ENCODE measurements at regions of chr3 and their contacts with region 1.

Region 1: DNA sequence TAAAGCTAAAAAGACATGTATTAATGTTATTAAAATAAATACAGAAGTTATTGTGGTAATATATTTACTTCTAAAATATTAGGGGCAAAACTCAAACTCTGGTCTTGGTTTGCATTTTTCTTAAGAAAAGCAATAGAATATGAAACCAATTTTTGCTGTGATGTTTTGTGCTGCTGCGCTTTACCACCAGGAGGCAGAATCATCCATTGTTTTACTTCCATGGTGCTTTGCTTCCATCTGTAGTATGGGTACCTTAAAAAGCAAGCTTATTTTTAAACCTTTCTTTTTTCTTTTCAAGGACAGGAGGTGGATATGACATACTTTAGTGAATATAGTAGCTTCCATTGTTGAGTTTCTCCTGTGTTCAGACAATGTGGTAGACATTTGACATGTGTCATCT is 46.6 kb upstream of the MRPL3 start:
- DNase-seq: no peak
- ATAC-seq: no peak
- H3K4me3 Mint-ChIP-seq: no peak overlapping the region
- H3K27ac Mint-ChIP-seq: no peak overlapping the region
- H3K4me1 Mint-ChIP-seq: peaks cover 11% of the 10 kb centered on the region
- H3K27me3 Mint-ChIP-seq: no peaks in the 10 kb centered on the region
- CTCF ChIP-seq: peak; percentile 45; the same call in 1 of the 2 replicates

Region 2: DNA sequence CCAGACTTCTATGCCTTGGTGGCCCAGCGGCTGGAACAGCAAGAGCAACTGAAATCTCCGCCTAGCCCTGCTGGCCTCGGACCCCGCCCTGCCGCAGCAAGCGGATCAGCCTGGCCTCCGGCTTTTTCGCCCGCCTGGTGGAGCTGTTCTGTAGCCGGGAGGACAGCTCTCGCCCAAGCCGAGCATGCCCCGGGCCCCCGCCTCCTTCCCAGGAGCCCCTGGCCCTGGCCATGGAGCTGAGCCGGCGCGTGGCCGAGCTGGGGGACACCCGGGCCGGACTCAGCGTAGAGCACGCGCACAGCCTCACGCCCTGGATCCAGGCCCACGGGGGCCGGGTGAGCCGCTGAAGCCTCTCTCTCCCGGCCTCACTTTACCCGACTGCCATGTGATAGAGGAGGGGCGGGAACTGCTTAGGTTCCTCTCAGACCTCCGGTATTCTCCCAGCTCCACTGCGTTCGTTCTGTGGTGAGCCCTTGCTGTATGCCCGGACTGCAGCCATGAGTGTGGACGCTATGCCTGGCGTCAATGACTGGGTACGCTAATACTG is 22.5 kb before region 1 on chr3:
- CTCF ChIA-PET with region 1: interaction called, 12 read pairs
- POLR2A ChIA-PET with region 1: interaction called, 8 read pairs
- DNase-seq: peak; percentile 91
- ATAC-seq: peak; percentile 99
- H3K4me3 Mint-ChIP-seq: peak overlapping the region; percentile 38; the same call in 1 of the 2 replicates
- H3K27ac Mint-ChIP-seq: no peak overlapping the region
- H3K4me1 Mint-ChIP-seq: no peaks in the 10 kb centered on the region
- H3K27me3 Mint-ChIP-seq: no peaks in the 10 kb centered on the region; the same call in 1 of the 2 replicates
- CTCF ChIP-seq: no peak

Region 3: DNA sequence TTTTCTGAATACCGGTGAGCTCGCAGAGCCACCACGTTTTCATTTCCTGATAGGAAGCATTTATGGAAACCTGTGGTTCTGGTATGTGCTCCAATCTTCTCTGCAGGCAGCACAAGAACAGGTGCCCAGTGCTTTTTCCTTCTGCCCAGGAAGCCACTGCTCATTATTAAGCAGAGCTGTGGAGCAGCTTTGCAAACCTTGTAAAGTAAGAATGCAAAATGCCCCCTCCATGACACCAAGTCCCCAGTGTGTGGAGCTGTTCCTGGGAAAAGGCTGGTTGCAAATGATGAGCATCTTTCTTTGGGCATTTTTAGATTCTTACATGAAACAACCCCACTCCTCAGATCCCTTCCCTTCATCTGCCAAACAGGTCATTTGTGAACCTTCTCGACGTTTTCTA is 19.1 kb after region 1 on chr3:
- CTCF ChIA-PET with region 1: interaction called, 11 read pairs
- POLR2A ChIA-PET with region 1: no interaction called
- DNase-seq: peak; percentile 19
- ATAC-seq: peak; percentile 93
- H3K4me3 Mint-ChIP-seq: no peak overlapping the region
- H3K27ac Mint-ChIP-seq: 0 out of 2 replicates have a peak overlapping the region, but pooled peaks have one; percentile 43
- H3K4me1 Mint-ChIP-seq: peaks cover 26% of the 10 kb centered on the region
- H3K27me3 Mint-ChIP-seq: peaks cover 11% of the 10 kb centered on the region
- CTCF ChIP-seq: no peak